PC-3 (cell line): ENCODE measurements at regions of chr11 and their contacts with region 1.

Region 1: DNA sequence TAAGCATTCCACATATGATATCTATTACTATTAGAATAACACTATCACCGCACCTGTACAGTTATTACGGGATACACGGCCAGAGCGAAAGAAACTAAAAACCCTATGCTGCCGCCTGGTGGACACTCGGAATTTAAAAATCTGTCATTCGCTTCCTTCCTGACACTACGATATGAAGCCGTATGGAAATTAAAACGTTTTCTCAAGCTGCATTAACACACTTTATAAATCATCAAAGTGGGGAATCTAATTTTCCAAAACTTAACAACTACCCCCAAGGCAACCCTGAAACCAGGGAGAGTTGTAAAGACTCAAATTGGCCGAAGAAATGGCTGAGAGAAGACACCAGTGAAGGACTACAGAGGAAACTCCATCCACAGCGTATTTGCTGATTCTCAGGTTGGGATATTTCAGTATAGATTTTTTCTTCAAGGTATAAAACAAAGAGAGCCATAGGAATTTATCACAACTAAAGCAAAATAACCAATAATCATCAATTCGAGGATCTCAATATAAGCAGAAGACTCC is 1.4 kb downstream of the CCDC73 start:
- DNase-seq: peak; percentile 81
- ATAC-seq: peak; percentile 66
- H3K4me3 ChIP-seq: peak overlapping the region; percentile 62
- H3K27ac ChIP-seq: peak overlapping the region; percentile 86
- H3K4me1 ChIP-seq: peaks cover 24% of the 10 kb centered on the region
- H3K27me3 ChIP-seq: no peaks in the 10 kb centered on the region
- CTCF ChIP-seq: peak; percentile 80

Region 2: DNA sequence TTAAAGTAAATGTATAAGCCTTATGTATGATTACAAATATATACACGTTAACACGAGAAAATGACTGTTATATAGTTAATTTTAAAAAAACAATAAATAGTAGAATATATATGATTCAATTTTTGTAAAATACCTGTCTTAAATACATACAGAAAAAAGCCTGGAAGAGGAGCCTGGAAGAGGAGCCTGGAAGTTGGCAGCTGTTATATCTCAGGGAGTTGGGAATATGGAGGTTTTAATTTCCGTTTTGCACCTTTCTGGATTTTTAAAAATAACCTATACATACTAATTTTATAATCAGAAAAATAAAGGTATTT is 469.2 kb before region 1 on chr11:
- CTCF ChIA-PET with region 1: interaction called, 4 read pairs
- POLR2A ChIA-PET with region 1: no interaction called
- intact Hi-C with region 1: loop called (anchors 1 kb)
- DNase-seq: no peak
- ATAC-seq: no peak
- H3K4me3 ChIP-seq: no peak overlapping the region
- H3K27ac ChIP-seq: no peak overlapping the region
- H3K4me1 ChIP-seq: peaks cover 7% of the 10 kb centered on the region
- H3K27me3 ChIP-seq: no peaks in the 10 kb centered on the region
- CTCF ChIP-seq: no peak

Region 3: DNA sequence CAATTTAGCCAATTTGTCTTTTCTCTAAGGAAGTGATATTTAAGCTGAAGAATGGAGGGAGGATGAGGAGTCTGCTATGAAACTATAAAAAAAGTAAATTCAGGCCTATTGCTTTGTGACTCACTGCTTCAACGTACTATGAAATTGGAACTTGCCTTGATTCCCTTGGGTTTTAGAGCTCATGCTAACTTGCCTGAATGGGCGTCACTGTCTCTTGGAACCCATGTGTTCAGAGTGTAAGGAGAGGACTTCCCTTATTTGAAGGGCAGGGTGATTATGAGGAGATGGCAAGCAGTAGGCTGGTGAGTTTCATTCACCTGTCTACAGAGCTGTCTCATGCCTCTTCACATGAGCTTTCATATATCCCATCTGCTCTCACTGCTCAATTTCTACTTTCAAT is 328.9 kb before region 1 on chr11:
- CTCF ChIA-PET with region 1: no interaction called
- POLR2A ChIA-PET with region 1: no interaction called
- intact Hi-C with region 1: no loop called
- DNase-seq: no peak
- ATAC-seq: no peak
- H3K4me3 ChIP-seq: no peak overlapping the region
- H3K27ac ChIP-seq: no peak overlapping the region
- H3K4me1 ChIP-seq: no peaks in the 10 kb centered on the region
- H3K27me3 ChIP-seq: no peaks in the 10 kb centered on the region
- CTCF ChIP-seq: no peak

Region 4: GRCh38 chr11:32583459-32584271 is 209.3 kb before region 1 on chr11 and contains the start of gene EIF3M:
- CTCF ChIA-PET with region 1: no interaction called
- POLR2A ChIA-PET with region 1: no interaction called
- intact Hi-C with region 1: loop called (anchors 1 kb)
- DNase-seq: peak; percentile 95
- ATAC-seq: peak; percentile 98
- H3K4me3 ChIP-seq: peak within 1 kb of the TSS; percentile 87
- H3K27ac ChIP-seq: peak within 1 kb of the TSS; percentile 65
- H3K4me1 ChIP-seq: peaks cover 39% of the 10 kb centered on the region
- H3K27me3 ChIP-seq: no peaks in the 10 kb centered on the region
- CTCF ChIP-seq: no peak
- total RNA-seq, gene EIF3M: 326 and 369 TPM in 2 replicates

Region 5: GRCh38 chr11:32713496-32713895 is 79.5 kb before region 1 on chr11:
- CTCF ChIA-PET with region 1: interaction called, 5 read pairs
- POLR2A ChIA-PET with region 1: no interaction called
- intact Hi-C with region 1: loop called (anchors 1 kb)
- DNase-seq: peak; percentile 46
- ATAC-seq: peak; percentile 53
- H3K4me3 ChIP-seq: no peak overlapping the region
- H3K27ac ChIP-seq: no peak overlapping the region
- H3K4me1 ChIP-seq: peaks cover 8% of the 10 kb centered on the region
- H3K27me3 ChIP-seq: no peaks in the 10 kb centered on the region
- CTCF ChIP-seq: peak; percentile 71

Region 6: DNA sequence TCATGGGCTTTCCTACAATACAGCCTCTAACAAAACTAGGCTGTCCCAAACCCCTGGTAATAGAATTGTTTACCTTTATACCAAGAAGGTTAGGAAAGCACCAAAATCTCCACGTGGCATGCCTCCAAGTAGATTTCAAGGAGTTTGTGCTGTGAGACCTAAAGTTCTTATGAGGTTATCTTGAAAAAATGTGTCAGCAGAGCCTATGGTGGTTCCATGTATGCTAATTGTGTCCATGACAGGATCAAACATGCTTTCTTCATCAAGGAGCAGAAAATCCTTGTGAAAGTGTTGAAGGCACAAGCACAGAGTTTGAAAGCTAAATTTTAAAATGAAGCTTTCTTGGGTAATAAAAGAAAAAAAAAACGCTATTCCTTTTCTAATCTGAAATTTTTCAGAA is 34.7 kb before region 1 on chr11:
- CTCF ChIA-PET with region 1: interaction called, 4 read pairs
- POLR2A ChIA-PET with region 1: no interaction called
- intact Hi-C with region 1: loop called (anchors 1 kb)
- DNase-seq: no peak
- ATAC-seq: no peak
- H3K4me3 ChIP-seq: no peak overlapping the region
- H3K27ac ChIP-seq: no peak overlapping the region
- H3K4me1 ChIP-seq: peaks cover 21% of the 10 kb centered on the region; the same call in 1 of the 2 replicates
- H3K27me3 ChIP-seq: no peaks in the 10 kb centered on the region
- CTCF ChIP-seq: no peak